ENCODE measurements at regions of chr5 and their contacts with region 1.

Region 1: GRCh38 chr5:83564069-83564749 is 92.7 kb downstream of the VCAN start:
- DNase-seq: no peak
- H3K4me3 ChIP-seq: no peak overlapping the region
- H3K27ac ChIP-seq: peak overlapping the region; percentile 19 to 77
- H3K4me1 ChIP-seq: peaks cover 8 to 52% of the 10 kb centered on the region in 2 donors
- H3K27me3 ChIP-seq: no peaks in the 10 kb centered on the region
- CTCF ChIP-seq: peak; percentile 51 to 67 (median 57)

Region 2: GRCh38 chr5:82312373-82312856 is 1251.8 kb before region 1 on chr5:
- intact Hi-C with region 1: loop called (anchors 5 kb)
- DNase-seq: peak; percentile 24 to 87
- H3K4me3 ChIP-seq: peak overlapping the region; percentile 10 to 30
- H3K27ac ChIP-seq: peak overlapping the region; percentile 61 to 80
- H3K4me1 ChIP-seq: peaks cover 4 to 9% of the 10 kb centered on the region in 2 donors
- H3K27me3 ChIP-seq: no peaks in the 10 kb centered on the region
- CTCF ChIP-seq: peak; percentile 85 to 91 (median 89)

Region 3: GRCh38 chr5:82641331-82642003 is 922.7 kb before region 1 on chr5:
- intact Hi-C with region 1: loop called (anchors 2 kb)
- DNase-seq: peak in 1 of 2 donors; percentile 88
- H3K4me3 ChIP-seq: no peak overlapping the region
- H3K27ac ChIP-seq: peak overlapping the region; percentile 61 to 77
- H3K4me1 ChIP-seq: peaks cover 5 to 19% of the 10 kb centered on the region in 2 donors
- H3K27me3 ChIP-seq: no peaks in the 10 kb centered on the region
- CTCF ChIP-seq: peak; percentile 62 to 80 (median 70)

Region 4: GRCh38 chr5:83281658-83282057 is 282.6 kb before region 1 on chr5:
- intact Hi-C with region 1: loop called (anchors 10 kb)
- DNase-seq: no peak
- H3K4me3 ChIP-seq: no peak overlapping the region
- H3K27ac ChIP-seq: no peak overlapping the region
- H3K4me1 ChIP-seq: peaks cover 0 to 5% of the 10 kb centered on the region in 2 donors
- H3K27me3 ChIP-seq: no peaks in the 10 kb centered on the region
- CTCF ChIP-seq: no peak

Region 5: GRCh38 chr5:83523929-83524328 is 40.3 kb before region 1 on chr5:
- intact Hi-C with region 1: loop called (anchors 5 kb)
- DNase-seq: no peak
- H3K4me3 ChIP-seq: no peak overlapping the region
- H3K27ac ChIP-seq: peak overlapping the region; percentile 0 to 46
- H3K4me1 ChIP-seq: no peaks in the 10 kb centered on the region
- H3K27me3 ChIP-seq: no peaks in the 10 kb centered on the region
- CTCF ChIP-seq: no peak

Region 6: GRCh38 chr5:83548581-83548980 is 15.6 kb before region 1 on chr5:
- intact Hi-C with region 1: no loop called
- DNase-seq: no peak
- H3K4me3 ChIP-seq: no peak overlapping the region
- H3K27ac ChIP-seq: peak overlapping the region; percentile 8 to 26
- H3K4me1 ChIP-seq: peaks cover 0 to 20% of the 10 kb centered on the region in 2 donors
- H3K27me3 ChIP-seq: no peaks in the 10 kb centered on the region
- CTCF ChIP-seq: no peak